ENCODE measurements at regions of chr16 and their contacts with region 1.

Region 1: DNA sequence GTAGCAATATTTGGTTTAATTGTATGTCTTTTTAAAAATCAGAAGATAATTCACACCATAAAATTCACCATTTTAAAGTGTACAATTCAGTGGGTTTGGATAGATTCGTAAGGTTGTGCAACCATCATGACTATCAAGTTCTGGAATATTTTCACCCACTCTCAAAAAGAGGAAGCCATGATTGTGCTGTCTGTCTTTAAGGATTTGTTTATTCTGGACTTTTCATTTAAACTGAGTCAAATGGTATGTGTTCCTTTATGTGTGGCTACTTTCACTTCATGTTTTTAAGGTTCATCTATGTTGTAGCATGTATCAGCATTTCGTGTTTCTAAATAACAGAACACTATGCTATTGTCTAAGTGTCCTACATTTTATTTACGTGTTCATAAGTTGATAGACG is 68.1 kb upstream of the CPHXL start:
- DNase-seq: no peak
- ATAC-seq: no peak

Region 2: GRCh38 chr16:76653390-76654026 is 859.1 kb after region 1 on chr16:
- intact Hi-C with region 1: loop called in 1 of 2 experiments (anchors 10 kb)
- DNase-seq: no peak
- ATAC-seq: peak; percentile 70